Common myeloid progenitor, CD34-positive (primary cell): ENCODE measurements at regions of chr3 and their contacts with region 1.

Region 1: DNA sequence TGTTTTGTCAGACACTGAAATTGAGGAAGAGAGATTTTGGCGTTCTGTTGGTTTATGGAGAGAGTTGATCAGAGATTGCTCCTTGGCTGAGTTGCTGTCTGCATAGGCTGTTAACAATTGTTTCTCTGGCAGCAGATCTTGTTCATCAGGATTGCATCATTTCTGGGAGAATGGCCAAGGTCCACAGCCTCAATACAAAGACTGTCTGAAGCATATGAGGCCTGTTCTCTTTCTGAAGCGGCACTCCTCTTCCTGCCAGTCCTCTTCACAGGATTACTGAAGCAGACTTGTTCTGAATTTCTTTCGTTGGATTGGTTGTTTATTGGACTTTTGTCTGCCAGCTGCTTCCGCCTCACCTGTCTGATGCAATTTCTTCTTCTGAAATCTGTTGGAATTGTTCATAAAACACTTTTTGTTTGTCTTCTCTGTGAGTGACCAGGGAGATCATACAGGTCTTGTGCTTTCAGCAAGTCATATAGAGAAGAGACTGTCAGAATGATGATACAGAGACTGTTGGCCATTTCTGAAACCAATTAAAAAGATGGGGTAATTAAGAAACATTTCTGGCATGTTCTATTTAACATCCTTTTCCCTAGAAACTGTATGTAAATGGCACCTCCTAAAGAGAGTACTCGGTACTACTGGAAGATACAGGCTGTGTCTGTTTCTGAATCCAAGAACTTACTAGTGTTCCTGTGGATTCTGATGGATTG is 25.5 kb downstream of the SETD5 start:
- DNase-seq: peak; percentile 61 to 71 (median 66)
- H3K4me3 ChIP-seq: peak overlapping the region in 1 of 7 experiments; percentile 30
- H3K27ac ChIP-seq: peak overlapping the region; percentile 26 to 80
- H3K4me1 ChIP-seq: peaks cover 2 to 22% (median 11%) of the 10 kb centered on the region in 4 experiments
- H3K27me3 ChIP-seq: no peaks in the 10 kb centered on the region

Region 2: DNA sequence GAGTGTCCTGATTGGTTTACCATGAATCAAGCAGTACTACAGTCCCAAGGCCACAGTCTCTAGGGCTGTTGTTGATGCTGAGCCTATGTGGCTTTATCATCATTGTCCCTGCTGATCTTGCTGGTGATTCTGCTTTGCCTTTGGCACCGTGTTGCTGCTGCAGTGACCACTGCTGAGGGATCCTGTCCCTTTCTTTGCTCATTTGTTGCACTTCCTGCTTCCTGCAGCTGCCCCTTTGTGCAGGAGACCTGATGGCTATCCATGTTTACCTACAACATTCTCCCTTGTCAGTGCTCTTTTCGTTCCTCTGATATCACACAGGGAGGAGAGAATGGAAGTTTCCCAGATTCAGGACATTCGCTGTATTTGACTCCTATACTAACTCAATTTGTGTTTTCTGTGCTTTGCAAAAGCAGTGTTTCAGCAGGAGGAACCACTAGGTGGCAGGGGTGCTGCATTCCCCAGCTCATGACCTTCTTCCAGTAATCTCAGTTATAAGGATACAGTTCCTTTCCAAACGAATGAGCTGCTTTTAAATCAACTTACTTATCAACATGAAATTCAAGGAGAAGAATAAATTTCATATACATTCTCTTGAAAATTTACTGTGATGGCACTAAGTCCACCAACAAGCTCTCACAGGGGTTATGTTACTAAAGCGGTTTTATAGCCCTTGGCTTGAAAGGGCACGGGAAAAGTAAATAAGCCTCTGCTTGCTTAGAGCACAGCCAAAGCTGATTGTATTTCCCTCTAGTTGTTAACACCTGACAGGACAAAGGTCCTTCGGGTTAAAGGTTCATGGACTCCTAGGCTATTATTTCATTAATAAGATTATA is 69.7 kb before region 1 on chr3:
- CTCF ChIA-PET with region 1: interaction called, 95 read pairs
- POLR2A ChIA-PET with region 1: interaction called, 3 read pairs
- DNase-seq: peak; percentile 74 to 80 (median 77)
- H3K4me3 ChIP-seq: peak overlapping the region in 2 of 7 experiments; percentile 5 to 19
- H3K27ac ChIP-seq: peak overlapping the region in 1 of 2 experiments; percentile 37
- H3K4me1 ChIP-seq: peaks cover 5 to 27% (median 24%) of the 10 kb centered on the region in 4 experiments
- H3K27me3 ChIP-seq: no peaks in the 10 kb centered on the region

Region 3: DNA sequence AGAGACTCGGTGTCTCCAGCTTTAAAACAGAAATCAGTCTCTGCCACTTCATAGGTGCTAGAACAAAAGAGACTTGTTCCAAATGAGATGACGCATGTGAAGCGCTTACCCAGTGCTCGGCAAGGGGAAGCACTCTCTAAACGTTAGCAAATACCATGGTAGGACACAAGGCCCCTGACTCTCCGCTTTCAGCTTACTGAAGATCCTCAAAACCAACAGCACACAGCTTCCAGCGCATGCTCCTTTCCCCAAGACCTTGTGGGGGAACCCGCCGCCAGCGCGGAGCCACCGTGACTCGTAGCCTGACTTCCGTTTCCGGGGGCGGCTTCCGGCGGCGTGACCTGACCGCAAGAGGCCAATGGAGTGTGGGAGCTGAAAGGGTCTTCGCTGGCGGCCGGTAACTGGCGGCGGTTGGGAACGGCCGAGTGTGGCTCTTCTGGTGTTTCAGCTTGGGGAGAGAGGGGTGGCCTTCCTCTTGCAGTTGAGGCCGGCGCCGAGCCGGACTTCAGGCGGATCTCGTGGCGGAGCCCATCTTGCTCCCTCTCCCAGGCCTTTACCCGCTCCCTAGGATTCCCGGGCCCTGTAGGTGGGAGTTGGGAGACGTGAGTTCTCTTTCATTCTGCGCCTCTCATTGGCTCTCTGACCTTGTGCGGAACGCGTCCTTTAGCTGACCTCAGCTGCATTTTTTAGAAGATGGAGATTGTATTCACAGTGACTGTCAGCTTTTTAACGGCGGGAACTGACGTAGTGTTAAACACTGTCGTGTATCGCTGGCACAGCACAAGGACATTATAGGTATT is 59.9 kb before region 1 on chr3 and contains the start of gene THUMPD3:
- CTCF ChIA-PET with region 1: interaction called, 17 read pairs
- POLR2A ChIA-PET with region 1: interaction called, 3 read pairs
- DNase-seq: peak; percentile 96 to 99 (median 98)
- H3K4me3 ChIP-seq: peak within 1 kb of the TSS; percentile 62 to 88 (median 81)
- H3K27ac ChIP-seq: peak within 1 kb of the TSS; percentile 95 to 98
- H3K4me1 ChIP-seq: peaks cover 9 to 14% (median 11%) of the 10 kb centered on the region in 4 experiments
- H3K27me3 ChIP-seq: no peaks in the 10 kb centered on the region

Region 4: GRCh38 chr3:9402410-9403228 is 20.2 kb before region 1 on chr3:
- CTCF ChIA-PET with region 1: interaction called, 17 read pairs
- POLR2A ChIA-PET with region 1: interaction called, 27 read pairs
- DNase-seq: no peak
- H3K4me3 ChIP-seq: no peak overlapping the region
- H3K27ac ChIP-seq: peak overlapping the region in 1 of 2 experiments; percentile 35
- H3K4me1 ChIP-seq: peaks cover 19 to 62% (median 46%) of the 10 kb centered on the region in 4 experiments
- H3K27me3 ChIP-seq: no peaks in the 10 kb centered on the region

Region 5: GRCh38 chr3:9497821-9498565 is 75.1 kb after region 1 on chr3:
- CTCF ChIA-PET with region 1: no interaction called
- POLR2A ChIA-PET with region 1: no interaction called
- DNase-seq: no peak
- H3K4me3 ChIP-seq: no peak overlapping the region
- H3K27ac ChIP-seq: no peak overlapping the region
- H3K4me1 ChIP-seq: peaks cover 0 to 10% (median 4%) of the 10 kb centered on the region in 4 experiments
- H3K27me3 ChIP-seq: peaks cover 0 to 42% (median 20%) of the 10 kb centered on the region in 5 experiments

Region 6: GRCh38 chr3:9525078-9525477 is 102.2 kb after region 1 on chr3:
- CTCF ChIA-PET with region 1: no interaction called
- POLR2A ChIA-PET with region 1: no interaction called
- DNase-seq: no peak
- H3K4me3 ChIP-seq: no peak overlapping the region
- H3K27ac ChIP-seq: no peak overlapping the region
- H3K4me1 ChIP-seq: no peaks in the 10 kb centered on the region
- H3K27me3 ChIP-seq: peaks cover 0 to 18% (median 3%) of the 10 kb centered on the region in 5 experiments